ENCODE measurements at regions of chr22 and their contacts with region 1.

Region 1: GRCh38 chr22:19122143-19122751 is at the start of gene DGCR2:
- DNase-seq: peak; percentile 96 to 97
- ATAC-seq: peak; percentile 77 to 87
- H3K4me3 ChIP-seq: peak within 1 kb of the TSS; percentile 76 to 97 (median 86)
- H3K27ac ChIP-seq: peak within 1 kb of the TSS; percentile 91 to 99 (median 97)
- H3K4me1 ChIP-seq: peaks cover 42 to 47% of the 10 kb centered on the region in 2 donors
- H3K27me3 ChIP-seq: no peaks in the 10 kb centered on the region
- CTCF ChIP-seq: no peak
- POLR2A ChIP-seq: peak; percentile 79 to 86
- total RNA-seq, gene DGCR2: 30.0 to 72.7 (median 43.5) TPM

Region 2: DNA sequence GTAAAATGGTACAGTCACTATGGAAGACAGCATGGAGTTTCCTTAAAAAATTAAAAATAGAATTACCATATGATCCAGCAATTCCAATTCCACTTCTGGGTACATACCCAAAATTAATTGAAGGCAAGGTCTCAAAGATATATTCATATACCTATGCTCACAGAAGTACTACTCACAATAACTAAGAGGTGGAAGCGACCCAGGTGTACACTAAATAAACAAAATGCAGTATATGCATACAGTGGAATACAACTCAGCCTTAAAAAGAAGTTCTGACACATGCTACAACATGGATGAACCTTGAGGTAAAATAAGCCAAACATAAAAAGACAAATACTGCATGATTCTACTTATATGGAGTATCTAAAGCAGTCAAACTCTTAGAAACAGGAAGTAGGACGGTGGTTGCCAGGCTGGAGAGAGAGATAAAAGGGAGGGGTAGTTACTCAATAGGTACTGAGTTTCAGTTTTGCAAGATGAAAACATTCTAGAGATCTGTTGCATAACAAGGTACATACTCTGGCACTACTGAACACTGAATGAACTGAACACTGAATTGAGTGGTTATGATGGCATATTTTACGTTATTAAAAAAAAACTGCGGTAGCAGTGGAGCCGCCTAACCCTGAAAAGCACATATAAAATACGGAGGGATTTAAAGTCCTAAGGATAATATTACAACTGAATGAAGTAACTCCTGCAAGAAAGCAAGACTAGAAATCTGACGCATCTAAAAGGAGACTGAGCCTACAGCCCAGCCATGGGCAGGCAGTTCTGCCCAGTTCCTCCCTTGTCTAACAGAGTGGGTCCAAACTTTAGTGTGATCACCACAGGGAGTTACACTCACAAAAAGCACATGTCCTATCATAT is 12.8 kb before region 1 on chr22:
- in situ Hi-C with region 1: no loop called
- intact Hi-C with region 1: loop called (anchors 1 kb)
- DNase-seq: peak; percentile 65 to 74
- ATAC-seq: peak; percentile 93 to 95
- H3K4me3 ChIP-seq: peak overlapping the region in 2 of 4 donors; percentile 27 to 29
- H3K27ac ChIP-seq: peak overlapping the region; percentile 78 to 90 (median 82)
- H3K4me1 ChIP-seq: peaks cover 64 to 81% of the 10 kb centered on the region in 2 donors
- H3K27me3 ChIP-seq: no peaks in the 10 kb centered on the region
- CTCF ChIP-seq: no peak
- POLR2A ChIP-seq: no peak

Region 3: DNA sequence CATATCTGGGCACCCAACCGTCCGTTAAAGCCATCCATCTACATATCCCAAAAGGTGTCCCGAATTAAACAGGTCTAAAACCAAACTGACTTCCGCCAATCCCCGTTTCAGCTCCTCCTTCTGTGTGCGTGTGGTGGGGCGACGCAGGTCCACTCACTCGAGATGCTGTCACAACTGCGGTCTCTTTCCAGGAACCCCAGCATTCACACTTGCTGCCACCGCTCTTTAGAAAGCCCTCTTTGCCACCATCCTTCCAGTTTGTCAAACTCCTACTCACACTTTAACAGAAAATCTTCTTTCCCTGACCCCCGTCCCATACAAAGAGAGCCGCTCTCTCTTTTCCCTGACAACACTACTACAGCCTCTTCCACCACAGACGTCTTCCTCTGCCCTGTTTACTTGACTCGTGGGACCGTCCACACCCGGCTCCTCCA is 21.7 kb after region 1 on chr22:
- in situ Hi-C with region 1: no loop called
- intact Hi-C with region 1: loop called (anchors 1 kb)
- DNase-seq: no peak
- ATAC-seq: peak in 1 of 2 donors; percentile 8
- H3K4me3 ChIP-seq: peak overlapping the region; percentile 78 to 96 (median 89)
- H3K27ac ChIP-seq: peak overlapping the region; percentile 81 to 86 (median 84)
- H3K4me1 ChIP-seq: peaks cover 8% of the 10 kb centered on the region in 2 donors
- H3K27me3 ChIP-seq: peaks cover 9 to 12% (median 11%) of the 10 kb centered on the region in 3 donors
- CTCF ChIP-seq: no peak
- POLR2A ChIP-seq: no peak

Region 4: GRCh38 chr22:19693981-19694670 is 571.9 kb after region 1 on chr22:
- in situ Hi-C with region 1: no loop called
- intact Hi-C with region 1: no loop called
- DNase-seq: no peak
- ATAC-seq: no peak
- H3K4me3 ChIP-seq: no peak overlapping the region
- H3K27ac ChIP-seq: no peak overlapping the region
- H3K4me1 ChIP-seq: no peaks in the 10 kb centered on the region
- H3K27me3 ChIP-seq: peaks cover 0 to 2% (median 0%) of the 10 kb centered on the region in 3 donors
- CTCF ChIP-seq: no peak
- POLR2A ChIP-seq: no peak

Measured in gastrocnemius medialis (tissue), 4 donors.